Activated T-helper 1 cell treated with anti-CD3 and anti-CD28 coated beads, Interleukin-12 subunit alpha, Interleukin-12 subunit beta, Interleukin-2, Interleukin-4 antibody, amounts not matched to agents 30 ng/mL and 10 ng/mL and 1 ng/mL, durations not matched to agents 14 hours and 24 hours and 36 hours (primary cell): ENCODE measurements at regions of chr5 and their contacts with region 1.

Region 1: DNA sequence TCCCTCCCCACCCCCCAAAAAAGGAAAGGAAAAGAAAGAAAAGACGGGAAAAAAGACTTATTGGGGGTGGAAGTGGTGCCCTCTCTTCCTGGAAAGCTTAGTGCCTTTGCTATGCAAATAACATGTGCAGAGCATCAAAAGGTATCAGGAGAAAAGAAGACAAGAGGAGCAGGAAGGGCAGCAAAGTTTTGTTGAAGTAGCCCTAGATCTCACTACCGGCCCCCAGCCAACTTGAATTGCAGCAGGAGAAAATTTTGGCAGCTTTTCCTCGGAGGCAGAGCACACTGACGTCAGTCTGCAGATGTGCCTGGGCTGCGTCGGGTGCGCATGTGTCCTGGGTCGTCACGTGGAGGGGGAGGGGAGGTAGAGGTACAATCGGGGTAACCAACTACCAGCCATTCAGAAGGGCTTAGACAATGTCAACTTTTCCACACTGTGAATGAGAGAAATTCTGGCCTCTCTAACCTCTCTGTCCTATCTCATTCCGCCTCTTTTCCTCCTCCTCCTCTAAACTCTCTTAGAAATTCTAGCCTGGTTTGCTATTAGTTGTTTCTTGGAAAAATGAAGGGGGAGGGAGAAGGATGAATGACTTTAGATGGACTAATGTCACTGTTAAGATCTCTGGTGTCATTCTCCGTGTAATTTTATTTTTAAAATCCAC is at the start of gene ADAMTS6:
- DNase-seq: peak; percentile 59
- H3K4me3 Mint-ChIP-seq: no peak within 1 kb of the TSS
- H3K27ac Mint-ChIP-seq: peak within 1 kb of the TSS; percentile 89
- H3K4me1 Mint-ChIP-seq: peaks cover 9% of the 10 kb centered on the region
- H3K27me3 Mint-ChIP-seq: peaks cover 4% of the 10 kb centered on the region
- total RNA-seq, gene ADAMTS6: 0.86 and 1.3 TPM in 2 replicates

Region 2: GRCh38 chr5:64768358-64769312 is 713.1 kb before region 1 on chr5 and contains the starts of genes CWC27 and SREK1IP1:
- intact Hi-C with region 1: loop called (anchors 1 kb)
- DNase-seq: peak; percentile 79
- H3K4me3 Mint-ChIP-seq: peak within 1 kb of the TSS; percentile 98
- H3K27ac Mint-ChIP-seq: peak within 1 kb of the TSS; percentile 96
- H3K4me1 Mint-ChIP-seq: peaks cover 51% of the 10 kb centered on the region
- H3K27me3 Mint-ChIP-seq: no peaks in the 10 kb centered on the region
- total RNA-seq, gene CWC27: 29.1 and 33.5 TPM in 2 replicates
- total RNA-seq, gene SREK1IP1: 29.4 and 31.7 TPM in 2 replicates

Region 3: GRCh38 chr5:64811050-64811640 is 670.6 kb before region 1 on chr5:
- intact Hi-C with region 1: loop called (anchors 1 kb)
- DNase-seq: no peak
- H3K4me3 Mint-ChIP-seq: no peak overlapping the region
- H3K27ac Mint-ChIP-seq: no peak overlapping the region
- H3K4me1 Mint-ChIP-seq: peaks cover 9% of the 10 kb centered on the region
- H3K27me3 Mint-ChIP-seq: no peaks in the 10 kb centered on the region

Region 4: GRCh38 chr5:65035211-65036206 is 446.3 kb before region 1 on chr5:
- intact Hi-C with region 1: loop called (anchors 2 kb)
- DNase-seq: peak; percentile 69
- H3K4me3 Mint-ChIP-seq: peak overlapping the region; percentile 84
- H3K27ac Mint-ChIP-seq: peak overlapping the region; percentile 88
- H3K4me1 Mint-ChIP-seq: peaks cover 35% of the 10 kb centered on the region
- H3K27me3 Mint-ChIP-seq: no peaks in the 10 kb centered on the region

Region 5: GRCh38 chr5:65102828-65103711 is 378.7 kb before region 1 on chr5:
- intact Hi-C with region 1: loop called (anchors 1 kb)
- DNase-seq: no peak
- H3K4me3 Mint-ChIP-seq: peak overlapping the region; percentile 79
- H3K27ac Mint-ChIP-seq: peak overlapping the region; percentile 42
- H3K4me1 Mint-ChIP-seq: peaks cover 30% of the 10 kb centered on the region
- H3K27me3 Mint-ChIP-seq: peaks cover 25% of the 10 kb centered on the region

Region 6: DNA sequence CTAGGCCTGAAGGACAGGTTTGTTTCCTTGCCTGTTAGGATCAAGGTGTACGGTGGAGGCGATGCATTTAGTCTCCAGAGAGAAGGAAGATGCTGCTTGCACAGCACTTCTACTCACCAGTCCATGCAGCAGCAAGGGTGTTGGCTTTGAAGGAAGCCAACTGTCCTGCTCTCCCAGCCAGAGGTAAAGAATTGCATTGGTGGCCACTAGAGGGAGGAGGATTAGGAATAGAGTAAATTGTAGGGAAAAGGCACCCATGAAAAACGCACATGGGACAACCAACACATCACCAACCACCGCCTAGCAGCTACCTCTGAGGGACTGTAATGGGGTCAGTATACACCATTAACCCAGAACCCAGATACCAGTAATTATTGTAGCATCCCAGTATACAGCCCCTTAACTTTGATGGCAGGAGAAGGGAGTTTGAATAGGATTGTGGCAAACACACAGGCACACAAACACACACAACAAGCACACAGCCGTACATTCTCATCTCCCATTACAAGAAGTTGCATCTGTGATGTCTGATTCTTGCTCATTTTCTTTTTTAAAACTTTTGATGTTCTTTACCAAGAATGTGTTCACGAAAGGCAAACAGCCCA is 267.7 kb before region 1 on chr5:
- intact Hi-C with region 1: loop called (anchors 5 kb)
- DNase-seq: no peak
- H3K4me3 Mint-ChIP-seq: no peak overlapping the region
- H3K27ac Mint-ChIP-seq: no peak overlapping the region
- H3K4me1 Mint-ChIP-seq: no peaks in the 10 kb centered on the region
- H3K27me3 Mint-ChIP-seq: peaks cover 2% of the 10 kb centered on the region

Region 7: GRCh38 chr5:65324226-65324625 is 157.5 kb before region 1 on chr5:
- intact Hi-C with region 1: no loop called
- DNase-seq: no peak
- H3K4me3 Mint-ChIP-seq: no peak overlapping the region
- H3K27ac Mint-ChIP-seq: no peak overlapping the region
- H3K4me1 Mint-ChIP-seq: no peaks in the 10 kb centered on the region
- H3K27me3 Mint-ChIP-seq: no peaks in the 10 kb centered on the region

Region 8: DNA sequence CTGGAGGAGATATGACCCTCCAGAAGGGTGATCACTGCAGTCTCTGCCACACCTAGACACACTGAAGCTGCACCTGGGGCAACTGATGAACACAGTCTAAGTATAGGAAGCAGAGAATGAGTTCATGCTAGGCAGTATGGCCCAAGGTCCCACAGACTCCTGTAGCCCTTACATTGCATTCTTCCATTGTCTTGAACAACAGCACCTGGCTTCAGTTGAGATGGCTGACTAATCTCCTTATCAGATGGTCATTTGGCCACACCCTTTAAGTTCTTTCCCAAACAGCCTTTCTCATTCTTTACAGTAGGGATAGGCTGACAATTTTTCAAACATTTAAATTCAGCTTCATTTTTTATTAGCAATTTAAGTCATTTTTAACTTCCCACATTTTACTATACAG is 58.1 kb after region 1 on chr5:
- intact Hi-C with region 1: no loop called
- DNase-seq: no peak
- H3K4me3 Mint-ChIP-seq: no peak overlapping the region
- H3K27ac Mint-ChIP-seq: no peak overlapping the region
- H3K4me1 Mint-ChIP-seq: peaks cover 11% of the 10 kb centered on the region
- H3K27me3 Mint-ChIP-seq: no peaks in the 10 kb centered on the region

Region 9: GRCh38 chr5:66144074-66144833 is 662.5 kb after region 1 on chr5 and contains the start of gene SREK1:
- intact Hi-C with region 1: loop called (anchors 1 kb)
- DNase-seq: peak; percentile 84
- H3K4me3 Mint-ChIP-seq: peak within 1 kb of the TSS; percentile 96
- H3K27ac Mint-ChIP-seq: peak within 1 kb of the TSS; percentile 99
- H3K4me1 Mint-ChIP-seq: peaks cover 47% of the 10 kb centered on the region
- H3K27me3 Mint-ChIP-seq: peaks cover 2% of the 10 kb centered on the region
- total RNA-seq, gene SREK1: 72.0 and 76.7 TPM in 2 replicates